Activated T-helper 1 cell treated with anti-CD3 and anti-CD28 coated beads, Interleukin-12 subunit alpha, Interleukin-12 subunit beta, Interleukin-2, Interleukin-4 antibody, amounts not matched to agents 30 ng/mL and 10 ng/mL and 1 ng/mL, durations not matched to agents 14 hours and 24 hours and 36 hours (primary cell): ENCODE measurements at regions of chr15 and their contacts with region 1.

Region 1: GRCh38 chr15:90387537-90388461 is at the start of gene IQGAP1:
- DNase-seq: peak; percentile 96
- H3K4me3 Mint-ChIP-seq: peak within 1 kb of the TSS; percentile 94
- H3K27ac Mint-ChIP-seq: peak within 1 kb of the TSS; percentile 96
- H3K4me1 Mint-ChIP-seq: peaks cover 43% of the 10 kb centered on the region
- H3K27me3 Mint-ChIP-seq: no peaks in the 10 kb centered on the region
- total RNA-seq, gene IQGAP1: 144 and 149 TPM in 2 replicates

Region 2: DNA sequence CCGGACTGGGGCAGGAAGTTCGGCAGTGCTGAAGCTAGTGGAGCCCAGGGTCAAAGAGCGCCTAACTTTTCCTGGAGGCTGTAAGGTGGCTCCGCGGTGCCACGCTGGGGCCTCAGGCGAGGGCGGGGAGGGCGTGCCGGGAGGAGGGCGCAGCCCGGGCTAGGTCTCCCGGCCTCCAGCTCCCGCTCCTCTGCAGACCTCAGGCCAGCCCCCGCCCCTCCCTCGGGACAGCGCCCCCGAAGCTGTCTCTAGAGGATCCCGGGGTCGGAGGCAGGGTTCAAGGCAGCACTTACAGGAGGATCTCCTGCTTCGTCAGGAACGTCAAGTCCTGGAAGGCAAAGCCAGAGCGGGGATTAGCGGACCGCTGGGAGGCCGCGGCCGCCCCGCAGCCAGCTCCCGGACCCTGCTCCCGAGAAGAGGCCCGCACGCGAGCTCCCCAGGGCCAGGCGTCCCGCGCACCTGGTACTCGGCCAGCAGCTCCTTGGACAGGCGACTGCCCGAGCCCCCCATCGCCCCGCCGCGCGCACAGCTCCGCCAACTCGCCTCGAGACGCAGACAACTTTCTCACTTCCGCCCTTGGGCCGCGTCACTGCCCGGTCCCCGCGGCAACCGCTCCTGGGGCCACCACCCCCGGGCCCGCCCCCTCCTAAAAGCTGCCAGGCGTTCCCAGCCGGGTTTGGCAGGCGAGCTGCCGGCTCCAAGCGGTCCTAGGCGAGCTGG is 154.3 kb before region 1 on chr15 and contains the start of gene CIB1:
- intact Hi-C with region 1: loop called (anchors 1 kb)
- DNase-seq: peak; percentile 98
- H3K4me3 Mint-ChIP-seq: peak within 1 kb of the TSS; percentile 93
- H3K27ac Mint-ChIP-seq: peak within 1 kb of the TSS; percentile 94
- H3K4me1 Mint-ChIP-seq: peaks cover 57% of the 10 kb centered on the region
- H3K27me3 Mint-ChIP-seq: no peaks in the 10 kb centered on the region
- total RNA-seq, gene CIB1: 144 and 145 TPM in 2 replicates

Region 3: GRCh38 chr15:90362936-90363212 is 24.9 kb before region 1 on chr15:
- intact Hi-C with region 1: loop called (anchors 1 kb)
- DNase-seq: no peak
- H3K4me3 Mint-ChIP-seq: peak overlapping the region; percentile 31
- H3K27ac Mint-ChIP-seq: peak overlapping the region; percentile 50
- H3K4me1 Mint-ChIP-seq: peaks cover 36% of the 10 kb centered on the region
- H3K27me3 Mint-ChIP-seq: no peaks in the 10 kb centered on the region

Region 4: GRCh38 chr15:90400406-90401314 is 12.9 kb after region 1 on chr15:
- intact Hi-C with region 1: loop called (anchors 1 kb)
- DNase-seq: peak; percentile 69
- H3K4me3 Mint-ChIP-seq: peak overlapping the region; percentile 64
- H3K27ac Mint-ChIP-seq: peak overlapping the region; percentile 94
- H3K4me1 Mint-ChIP-seq: peaks cover 58% of the 10 kb centered on the region
- H3K27me3 Mint-ChIP-seq: no peaks in the 10 kb centered on the region

Region 5: DNA sequence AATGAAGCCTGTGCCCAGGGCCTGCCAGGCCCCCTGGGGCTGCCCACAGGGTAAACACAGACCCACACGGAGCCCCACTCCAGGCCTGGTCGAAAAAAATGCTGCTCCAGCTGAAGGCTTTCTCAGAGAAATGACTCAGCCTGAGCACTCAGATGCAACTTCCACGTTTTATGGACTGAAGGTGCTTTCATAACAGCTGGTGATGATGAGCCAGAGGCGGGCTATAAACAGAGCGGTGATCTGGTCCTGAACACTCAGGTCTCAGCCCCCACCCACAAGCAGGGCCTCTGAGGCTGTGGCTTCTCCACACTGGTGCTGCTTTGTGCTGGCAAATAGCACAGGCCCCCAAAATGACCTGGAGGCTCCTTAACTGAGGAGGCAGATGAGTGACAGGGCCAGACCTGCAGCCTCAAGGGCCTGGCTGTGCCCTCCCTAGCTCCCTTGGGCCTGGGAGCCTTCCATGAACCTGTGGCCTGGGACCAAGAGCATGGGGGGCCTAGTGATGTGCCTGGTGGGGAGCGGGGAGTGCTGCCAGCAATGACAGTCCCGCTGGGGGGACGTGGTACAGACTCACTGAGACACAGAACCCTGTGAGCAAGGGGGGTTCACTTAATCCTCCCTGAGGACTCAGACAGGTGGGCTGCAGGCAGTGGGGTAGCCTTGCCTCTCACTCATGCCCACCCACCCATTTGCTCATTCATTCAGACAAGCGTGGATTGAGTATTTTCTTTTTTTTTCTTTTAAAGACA is 457.6 kb after region 1 on chr15:
- intact Hi-C with region 1: loop called (anchors 1 kb)
- DNase-seq: peak; percentile 68
- H3K4me3 Mint-ChIP-seq: peak overlapping the region; percentile 53
- H3K27ac Mint-ChIP-seq: peak overlapping the region; percentile 97
- H3K4me1 Mint-ChIP-seq: peaks cover 62% of the 10 kb centered on the region
- H3K27me3 Mint-ChIP-seq: no peaks in the 10 kb centered on the region